Dendritic cell treated with granulocyte-macrophage colony-stimulating factor and Interleukin-4, amounts not matched to agents 40 ng/mL and 50 ng/mL, for 4 days (primary cell): ENCODE measurements at regions of chr3 and their contacts with region 1.

Region 1: GRCh38 chr3:63921741-63922482 is 9.7 kb upstream of the SCAANT1 start:
- H3K4me3 Mint-ChIP-seq: peak overlapping the region; percentile 42
- H3K27ac Mint-ChIP-seq: peak overlapping the region; percentile 66
- H3K4me1 Mint-ChIP-seq: peaks cover 88% of the 10 kb centered on the region
- H3K27me3 Mint-ChIP-seq: no peaks in the 10 kb centered on the region

Region 2: DNA sequence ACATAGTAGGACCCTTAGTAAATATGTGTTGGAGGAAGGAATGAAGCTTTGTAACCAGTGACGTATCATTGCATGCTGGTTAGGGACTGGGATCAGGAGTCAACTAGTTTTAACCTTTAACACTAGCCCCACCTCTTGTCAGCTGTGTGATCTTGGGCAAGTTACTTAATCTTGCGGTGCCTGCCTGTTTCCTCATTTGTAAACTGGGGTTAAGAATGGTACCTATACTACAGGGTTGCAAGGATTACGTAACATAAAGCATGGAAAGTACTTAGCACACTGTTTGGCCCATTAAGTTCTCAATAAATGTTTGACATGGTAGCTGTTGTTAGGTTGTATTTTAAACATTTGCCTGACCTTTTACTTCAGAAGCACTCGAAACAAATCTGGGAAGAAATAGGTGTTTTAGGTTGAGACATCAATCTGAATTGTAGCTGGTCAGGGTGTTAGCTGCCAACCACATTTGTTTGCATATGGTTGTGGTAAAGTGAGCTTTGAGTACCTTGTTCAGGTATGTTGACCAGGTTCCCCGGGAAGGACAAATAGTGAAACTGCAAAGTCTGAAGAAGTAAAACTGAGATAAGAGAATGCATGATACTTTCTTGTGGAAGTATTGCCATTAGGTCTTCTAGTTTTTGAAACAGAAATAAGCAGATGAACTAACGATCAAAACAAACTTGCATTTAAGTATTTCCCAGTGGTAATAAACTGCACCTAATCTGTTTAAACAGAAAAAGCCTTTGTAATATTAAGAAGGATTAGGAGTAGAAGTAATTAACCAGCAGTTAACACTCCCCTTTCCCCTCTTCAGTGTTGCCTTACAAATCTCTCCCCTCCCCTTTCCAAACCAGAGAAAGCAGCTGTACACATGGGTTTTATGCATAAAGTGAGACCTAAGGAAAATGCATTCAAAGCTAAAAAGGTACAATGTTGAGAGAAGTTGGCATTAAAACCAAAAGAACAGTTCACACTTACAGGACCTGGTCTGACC is 16.0 kb after region 1 on chr3:
- intact Hi-C with region 1: no loop called
- H3K4me3 Mint-ChIP-seq: no peak overlapping the region
- H3K27ac Mint-ChIP-seq: no peak overlapping the region
- H3K4me1 Mint-ChIP-seq: peaks cover 64% of the 10 kb centered on the region
- H3K27me3 Mint-ChIP-seq: no peaks in the 10 kb centered on the region

Region 3: GRCh38 chr3:63961891-63962290 is 40.0 kb after region 1 on chr3:
- intact Hi-C with region 1: loop called (anchors 5 kb)
- H3K4me3 Mint-ChIP-seq: no peak overlapping the region
- H3K27ac Mint-ChIP-seq: no peak overlapping the region
- H3K4me1 Mint-ChIP-seq: peaks cover 36% of the 10 kb centered on the region
- H3K27me3 Mint-ChIP-seq: no peaks in the 10 kb centered on the region

Region 4: GRCh38 chr3:64023187-64023848 is 101.4 kb after region 1 on chr3 and contains the start of gene PSMD6:
- intact Hi-C with region 1: loop called (anchors 5 kb)
- H3K4me3 Mint-ChIP-seq: peak within 1 kb of the TSS; percentile 89
- H3K27ac Mint-ChIP-seq: peak within 1 kb of the TSS; percentile 92
- H3K4me1 Mint-ChIP-seq: peaks cover 14% of the 10 kb centered on the region
- H3K27me3 Mint-ChIP-seq: peaks cover 15% of the 10 kb centered on the region

Region 5: DNA sequence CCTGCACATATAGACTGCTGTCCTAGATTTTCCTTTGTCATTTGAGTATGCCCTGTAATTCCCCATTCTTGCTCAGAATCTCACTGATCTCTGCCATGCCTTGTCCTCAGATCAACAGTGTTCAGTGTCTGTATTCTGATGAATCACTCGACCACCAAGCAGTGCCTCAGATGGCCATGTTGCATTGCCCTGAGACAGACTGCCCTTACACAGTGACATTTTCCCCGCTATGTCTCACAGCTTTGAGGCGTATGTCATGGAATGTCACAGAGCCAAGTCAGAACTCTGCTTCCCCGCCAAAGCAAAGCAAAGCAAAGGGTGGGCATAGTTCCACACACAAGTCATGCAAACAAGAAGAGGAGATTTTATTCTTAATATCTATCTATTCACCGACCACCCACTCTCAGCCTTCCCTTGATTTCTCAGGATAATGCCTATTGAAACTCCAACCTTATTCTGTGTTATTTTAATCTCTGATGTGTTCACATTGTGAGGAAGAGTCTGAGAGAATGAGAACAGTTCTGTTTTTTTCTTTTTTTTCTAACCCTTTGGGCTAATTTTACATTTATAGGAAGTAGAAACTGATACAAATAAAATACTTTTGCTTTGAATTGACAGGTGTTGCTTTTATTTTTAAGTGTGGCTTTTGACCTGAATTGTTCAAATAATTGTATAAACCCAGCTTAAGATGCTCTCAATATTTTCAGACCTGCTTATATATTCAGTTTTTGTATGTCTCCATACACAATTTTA is 118.2 kb after region 1 on chr3:
- intact Hi-C with region 1: no loop called
- H3K4me3 Mint-ChIP-seq: no peak overlapping the region
- H3K27ac Mint-ChIP-seq: no peak overlapping the region
- H3K4me1 Mint-ChIP-seq: no peaks in the 10 kb centered on the region
- H3K27me3 Mint-ChIP-seq: peaks cover 14% of the 10 kb centered on the region